ENCODE measurements at regions of chr15 and their contacts with region 1.

Region 1: DNA sequence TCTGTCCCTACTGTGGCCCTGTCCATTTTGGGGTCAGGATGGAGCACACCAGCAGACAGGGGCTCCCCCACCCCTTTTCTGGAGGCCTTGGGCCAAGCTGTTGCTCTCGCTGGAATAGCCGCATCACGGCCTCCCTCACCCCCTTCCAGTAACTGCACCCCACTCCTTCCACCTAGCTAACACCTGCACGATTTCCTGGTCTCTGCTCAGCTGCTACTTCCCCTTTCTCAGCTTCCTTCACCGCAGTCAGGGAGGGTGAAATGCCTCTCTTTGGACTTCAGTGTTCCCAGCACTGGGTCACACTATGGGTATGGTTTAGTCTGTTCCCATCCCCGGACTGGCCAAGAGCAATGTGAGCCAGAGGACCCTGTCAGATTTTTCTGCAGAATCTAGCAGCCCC is 400.2 kb downstream of the MCTP2 start:
- DNase-seq: no peak
- H3K4me3 ChIP-seq: no peak overlapping the region
- H3K27ac ChIP-seq: no peak overlapping the region
- H3K4me1 ChIP-seq: no peaks in the 10 kb centered on the region
- H3K27me3 ChIP-seq: no peaks in the 10 kb centered on the region
- CTCF ChIP-seq: no peak
- EP300 ChIP-seq: no peak
- POLR2A ChIP-seq: no peak

Region 2: DNA sequence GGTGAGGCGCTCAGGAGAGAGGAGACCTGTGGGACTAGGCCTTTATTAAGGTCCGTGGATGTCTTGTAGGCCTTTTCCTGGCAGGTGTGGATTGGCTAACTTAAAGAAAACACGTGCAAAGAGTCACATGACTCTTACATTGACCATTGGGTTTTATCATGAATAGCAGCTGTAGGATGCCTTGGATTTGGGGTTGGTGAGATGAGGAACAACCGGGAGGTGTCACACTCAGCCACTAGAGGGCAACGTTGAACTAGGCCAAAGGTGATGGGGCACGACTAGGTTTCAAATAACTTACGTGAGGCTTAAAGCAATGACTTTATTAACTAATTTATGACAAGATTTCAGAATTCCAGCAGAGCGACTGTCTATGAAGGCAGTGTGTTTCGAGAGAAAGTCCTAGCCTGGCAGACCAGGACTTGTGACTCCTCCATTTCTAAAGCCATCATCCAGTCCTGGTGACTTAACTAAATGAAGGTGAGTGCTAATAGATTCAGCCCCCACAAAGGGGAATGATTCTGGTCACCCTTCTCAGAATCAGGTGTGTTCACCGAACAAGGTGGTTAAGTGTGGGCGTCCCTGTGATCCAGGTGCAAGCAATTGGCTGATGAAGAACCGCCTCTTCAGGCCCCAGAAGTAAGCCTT is 54.6 kb before region 1 on chr15:
- in situ Hi-C with region 1: no loop called
- intact Hi-C with region 1: loop called (anchors 10 kb)
- DNase-seq: peak; percentile 10
- H3K4me3 ChIP-seq: no peak overlapping the region
- H3K27ac ChIP-seq: no peak overlapping the region
- H3K4me1 ChIP-seq: no peaks in the 10 kb centered on the region
- H3K27me3 ChIP-seq: no peaks in the 10 kb centered on the region
- CTCF ChIP-seq: peak; percentile 31 to 45 (median 36)
- EP300 ChIP-seq: no peak
- POLR2A ChIP-seq: no peak